H1 (cell line): ENCODE measurements at regions of chr12 and their contacts with region 1.

Region 1: DNA sequence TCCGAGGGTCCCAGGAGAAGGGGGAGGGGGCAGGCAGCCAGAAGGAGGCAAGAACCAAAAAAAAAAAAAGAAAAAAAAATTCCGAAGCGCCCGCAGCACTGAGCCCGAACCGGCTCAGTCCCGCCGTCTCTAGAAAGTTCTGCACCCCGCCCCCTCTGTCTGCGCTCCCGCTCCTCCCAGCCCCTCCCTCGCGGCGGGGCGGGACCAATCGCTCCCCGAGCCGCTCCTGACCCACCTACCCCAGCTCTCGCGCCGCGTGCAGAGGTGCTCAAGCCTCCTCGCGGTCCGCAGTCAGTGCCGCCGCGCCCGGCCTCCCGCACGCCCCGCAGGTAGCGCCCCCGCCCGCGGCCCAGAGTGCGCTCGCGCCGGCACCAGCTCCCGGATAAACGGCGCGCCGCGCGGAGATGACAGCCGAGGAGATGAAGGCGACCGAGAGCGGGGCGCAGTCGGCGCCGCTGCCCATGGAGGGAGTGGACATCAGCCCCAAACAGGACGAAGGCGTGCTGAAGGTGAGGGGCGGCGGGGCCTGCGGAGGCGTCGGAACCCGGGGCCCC is at the start of gene FKBP4:
- DNase-seq: peak; percentile 63 to 89
- H3K4me3 ChIP-seq: peak within 1 kb of the TSS; percentile 59 to 73 (median 66)
- H3K27ac ChIP-seq: no peak within 1 kb of the TSS
- H3K4me1 ChIP-seq: peaks cover 4 to 6% (median 5%) of the 10 kb centered on the region in 4 experiments; a peak in 5 of 7 replicates
- H3K27me3 ChIP-seq: peaks cover 0 to 6% (median 4%) of the 10 kb centered on the region in 4 experiments; a peak in 6 of 7 replicates
- CTCF ChIP-seq: no peak
- EP300 ChIP-seq: 0 out of 3 replicates have a peak, but pooled peaks of 1 of the 2 experiments have one; percentile 18
- POLR2A ChIP-seq: peak; percentile 38 to 73
- RAD21 ChIP-seq: no peak
- total RNA-seq, gene FKBP4: 227 and 243 TPM in 2 replicates

Region 2: DNA sequence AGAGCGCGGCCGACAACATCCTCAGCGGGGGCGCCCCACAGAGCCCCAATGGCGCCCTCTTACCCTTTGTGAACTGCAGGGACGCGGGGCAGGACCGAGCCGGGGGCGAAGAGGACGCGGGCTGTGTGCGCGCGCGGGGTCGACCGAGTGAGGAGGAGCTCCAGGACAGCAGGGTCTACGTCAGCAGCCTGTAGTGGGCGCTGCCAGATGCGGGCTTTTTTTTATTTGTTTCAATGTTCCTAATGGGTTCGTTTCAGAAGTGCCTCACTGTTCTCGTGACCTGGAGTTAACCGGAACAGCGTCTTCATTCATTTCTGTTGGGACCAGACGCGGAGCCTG is 103.8 kb before region 1 on chr12:
- CTCF ChIA-PET with region 1: interaction called, 5 read pairs
- POLR2A ChIA-PET with region 1: interaction called, 11 read pairs
- DNase-seq: no peak
- H3K4me3 ChIP-seq: peak overlapping the region; percentile 54 to 82 (median 62)
- H3K27ac ChIP-seq: no peak overlapping the region
- H3K4me1 ChIP-seq: peaks cover 0 to 8% (median 4%) of the 10 kb centered on the region in 4 experiments; a peak in 4 of 7 replicates
- H3K27me3 ChIP-seq: peaks cover 0 to 7% (median 6%) of the 10 kb centered on the region in 4 experiments; a peak in 3 of 7 replicates
- CTCF ChIP-seq: peak in 2 of 3 experiments; percentile 34 to 36; a peak in 3 of 4 replicates
- EP300 ChIP-seq: no peak
- POLR2A ChIP-seq: no peak
- RAD21 ChIP-seq: 0 out of 4 replicates have a peak, but pooled peaks of 1 of the 2 experiments have one; percentile 5

Region 3: GRCh38 chr12:2820432-2820831 is 25.6 kb after region 1 on chr12:
- CTCF ChIA-PET with region 1: interaction called, 12 read pairs
- POLR2A ChIA-PET with region 1: interaction called, 15 read pairs
- DNase-seq: no peak
- H3K4me3 ChIP-seq: no peak overlapping the region
- H3K27ac ChIP-seq: no peak overlapping the region; the same call in 1 of the 2 replicates
- H3K4me1 ChIP-seq: peaks cover 0 to 13% (median 6%) of the 10 kb centered on the region in 4 experiments; a peak in 5 of 7 replicates
- H3K27me3 ChIP-seq: no peaks in the 10 kb centered on the region
- CTCF ChIP-seq: no peak
- EP300 ChIP-seq: no peak
- POLR2A ChIP-seq: no peak
- RAD21 ChIP-seq: no peak